ENCODE measurements at regions of chr19 and their contacts with region 1.

Region 1: DNA sequence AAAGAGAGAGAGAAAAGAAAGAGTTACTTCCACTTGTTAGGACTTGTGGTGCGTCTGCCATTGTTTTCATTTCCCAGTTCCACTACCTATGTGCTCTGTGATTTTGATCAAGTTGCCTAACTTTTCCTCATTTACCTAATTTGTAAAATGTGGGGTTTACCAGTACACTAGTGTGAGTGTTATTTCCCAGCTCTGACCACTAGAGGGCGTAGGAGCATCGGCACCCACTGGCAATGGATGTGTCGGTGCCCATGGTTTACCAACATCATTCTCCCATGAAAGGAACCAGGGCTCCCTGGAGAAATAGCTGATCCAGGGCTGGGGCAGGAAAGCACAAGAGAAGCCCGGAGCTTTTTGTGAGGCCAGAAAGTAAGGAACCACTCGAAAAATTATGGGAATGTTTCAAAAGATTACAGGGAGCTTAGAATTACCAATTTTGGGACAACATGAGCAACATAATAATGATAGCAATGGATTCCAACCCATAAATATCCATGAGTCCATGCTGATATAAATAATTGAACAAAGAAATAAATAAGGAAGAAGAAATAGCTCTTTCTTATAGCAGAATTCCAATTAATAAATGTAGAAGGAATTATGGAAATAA is 15.1 kb upstream of the CEACAM4 start:
- DNase-seq: peak; percentile 78
- H3K4me3 ChIP-seq: peak overlapping the region in 1 of 2 experiments; percentile 22; a peak in 1 of 4 replicates
- H3K27ac ChIP-seq: no peak overlapping the region
- H3K4me1 ChIP-seq: no peaks in the 10 kb centered on the region
- H3K27me3 ChIP-seq: no peaks in the 10 kb centered on the region; the same call in 1 of the 2 replicates
- CTCF ChIP-seq: peak; percentile 92
- EP300 ChIP-seq: no peak
- RAD21 ChIP-seq: peak; percentile 68

Region 2: GRCh38 chr19:41226053-41226873 is 415.7 kb before region 1 on chr19:
- CTCF ChIA-PET with region 1: no interaction called
- POLR2A ChIA-PET with region 1: no interaction called
- DNase-seq: peak; percentile 56
- H3K4me3 ChIP-seq: peak overlapping the region; percentile 9 to 49; a peak in 2 of 4 replicates
- H3K27ac ChIP-seq: peak overlapping the region; percentile 41 to 96
- H3K4me1 ChIP-seq: peaks cover 0 to 27% of the 10 kb centered on the region in 2 experiments; a peak in 2 of 4 replicates
- H3K27me3 ChIP-seq: no peaks in the 10 kb centered on the region
- CTCF ChIP-seq: no peak
- EP300 ChIP-seq: peak in 1 of 2 experiments; percentile 89; a peak in 2 of 4 replicates
- RAD21 ChIP-seq: no peak

Region 3: DNA sequence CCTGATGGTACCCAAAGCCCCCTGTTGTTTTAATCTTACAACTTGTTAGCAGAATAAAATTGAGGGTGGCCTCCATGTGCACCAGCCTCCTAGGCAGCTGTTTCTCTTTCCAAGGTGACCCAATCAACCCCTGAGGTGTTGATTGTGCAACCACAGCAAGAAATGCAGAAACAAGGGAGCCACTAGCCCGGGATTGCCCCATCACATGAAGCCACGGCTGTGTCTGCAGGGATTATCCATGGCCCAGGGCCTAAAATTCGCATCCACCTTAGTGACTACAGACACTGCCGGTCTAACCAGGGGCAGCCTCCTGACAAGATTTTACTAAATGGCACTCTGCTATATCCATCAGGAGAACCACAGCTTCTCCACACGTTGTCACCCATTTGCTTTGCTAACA is 29.5 kb before region 1 on chr19:
- CTCF ChIA-PET with region 1: interaction called, 10 read pairs
- POLR2A ChIA-PET with region 1: no interaction called
- DNase-seq: no peak
- H3K4me3 ChIP-seq: no peak overlapping the region
- H3K27ac ChIP-seq: no peak overlapping the region
- H3K4me1 ChIP-seq: no peaks in the 10 kb centered on the region
- H3K27me3 ChIP-seq: no peaks in the 10 kb centered on the region; the same call in 1 of the 2 replicates
- CTCF ChIP-seq: no peak
- EP300 ChIP-seq: no peak
- RAD21 ChIP-seq: no peak

Region 4: GRCh38 chr19:41626877-41627276 is 15.1 kb before region 1 on chr19 and contains the start of gene CEACAM4:
- CTCF ChIA-PET with region 1: interaction called, 21 read pairs
- POLR2A ChIA-PET with region 1: no interaction called
- DNase-seq: no peak
- H3K4me3 ChIP-seq: no peak within 1 kb of the TSS
- H3K27ac ChIP-seq: no peak within 1 kb of the TSS
- H3K4me1 ChIP-seq: no peaks in the 10 kb centered on the region
- H3K27me3 ChIP-seq: peaks cover 9% of the 10 kb centered on the region; the same call in 1 of the 2 replicates
- CTCF ChIP-seq: no peak
- EP300 ChIP-seq: no peak
- RAD21 ChIP-seq: no peak
- polyA plus RNA-seq, gene CEACAM4: not detected in 2 replicates

Region 5: DNA sequence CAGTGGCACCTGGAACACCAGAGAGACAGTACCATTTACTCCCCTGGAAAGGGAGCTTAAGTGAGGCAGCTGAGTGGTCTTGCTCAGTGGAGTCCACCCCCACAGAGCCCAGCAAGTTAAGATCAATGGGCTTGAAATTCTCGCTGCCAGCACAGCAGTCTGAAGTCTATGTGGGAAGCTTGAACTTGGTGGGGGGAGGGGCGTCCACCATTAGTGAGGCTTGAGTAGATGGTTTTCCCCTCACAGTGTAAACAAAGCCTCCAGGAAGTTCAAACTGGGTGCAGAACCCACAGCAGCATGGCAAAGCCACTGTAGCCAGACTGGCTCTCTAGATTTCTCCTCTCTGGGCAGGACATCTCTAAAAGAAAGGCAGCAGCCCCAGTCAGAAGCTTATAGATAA is 15.2 kb after region 1 on chr19:
- CTCF ChIA-PET with region 1: interaction called, 13 read pairs
- POLR2A ChIA-PET with region 1: no interaction called
- DNase-seq: no peak
- H3K4me3 ChIP-seq: no peak overlapping the region
- H3K27ac ChIP-seq: no peak overlapping the region
- H3K4me1 ChIP-seq: no peaks in the 10 kb centered on the region
- H3K27me3 ChIP-seq: no peaks in the 10 kb centered on the region; the same call in 1 of the 2 replicates
- CTCF ChIP-seq: no peak
- EP300 ChIP-seq: no peak
- RAD21 ChIP-seq: no peak

Region 6: DNA sequence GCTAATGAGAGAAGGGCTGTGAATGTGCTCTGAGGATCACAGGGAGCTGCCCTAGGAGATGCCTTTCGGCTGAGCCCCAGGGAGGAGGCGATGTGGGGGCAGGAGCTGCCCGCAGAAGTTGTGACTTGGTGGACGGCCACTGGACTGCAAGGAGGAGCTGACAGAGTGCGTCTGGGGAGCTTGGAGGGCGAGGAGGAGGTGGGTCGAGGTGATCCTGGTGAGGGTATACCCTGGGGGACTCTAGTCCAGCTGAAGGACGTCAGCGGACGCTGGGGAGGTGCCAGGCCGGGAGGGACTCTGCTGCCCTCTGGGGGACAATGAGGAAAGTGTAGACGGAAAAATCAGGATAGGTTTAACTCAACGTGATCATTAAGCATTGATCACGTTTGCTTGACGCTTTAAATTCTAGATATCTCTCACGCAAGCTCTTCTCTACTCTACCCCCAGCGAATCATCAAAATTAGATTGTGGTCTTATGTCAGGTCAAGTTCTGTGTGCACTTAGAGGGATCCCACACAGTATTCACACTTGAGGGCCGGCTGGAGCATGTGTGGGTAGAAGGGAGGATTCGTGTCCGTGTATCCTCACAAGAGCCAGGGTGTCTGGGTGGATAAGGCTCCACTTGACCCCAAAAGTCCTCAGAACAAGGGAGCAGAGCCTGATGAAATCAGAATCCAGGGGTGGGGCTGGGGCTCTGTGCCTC is 49.4 kb after region 1 on chr19:
- CTCF ChIA-PET with region 1: interaction called, 19 read pairs
- POLR2A ChIA-PET with region 1: no interaction called
- DNase-seq: peak; percentile 67
- H3K4me3 ChIP-seq: peak overlapping the region in 1 of 2 experiments; percentile 35; a peak in 1 of 4 replicates
- H3K27ac ChIP-seq: no peak overlapping the region
- H3K4me1 ChIP-seq: no peaks in the 10 kb centered on the region
- H3K27me3 ChIP-seq: no peaks in the 10 kb centered on the region
- CTCF ChIP-seq: peak; percentile 63
- EP300 ChIP-seq: no peak
- RAD21 ChIP-seq: no peak

Region 7: DNA sequence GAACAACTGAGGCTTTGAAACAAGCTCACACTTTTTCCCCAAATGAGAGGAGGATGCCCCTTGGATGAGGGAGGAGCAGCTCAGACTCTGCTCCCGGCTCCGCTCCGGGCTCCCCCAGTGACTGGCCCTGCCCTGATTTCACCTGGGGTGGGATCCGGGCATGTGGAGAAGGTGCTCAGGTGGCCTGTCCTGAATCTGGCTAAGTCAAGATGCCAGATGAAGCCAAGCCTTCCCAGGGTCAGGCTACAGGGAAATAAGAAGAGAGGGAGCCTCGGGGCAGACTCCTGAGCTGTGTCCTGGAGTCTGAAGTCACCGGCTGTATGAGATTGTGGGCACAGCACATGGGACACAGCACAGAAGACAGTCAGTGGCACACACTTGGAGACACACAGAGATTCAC is 76.8 kb after region 1 on chr19:
- CTCF ChIA-PET with region 1: no interaction called
- POLR2A ChIA-PET with region 1: no interaction called
- DNase-seq: no peak
- H3K4me3 ChIP-seq: no peak overlapping the region
- H3K27ac ChIP-seq: no peak overlapping the region
- H3K4me1 ChIP-seq: no peaks in the 10 kb centered on the region
- H3K27me3 ChIP-seq: peaks cover 28% of the 10 kb centered on the region
- CTCF ChIP-seq: no peak
- EP300 ChIP-seq: no peak
- RAD21 ChIP-seq: no peak

Measured in SK-N-SH (cell line).